Heart left ventricle (tissue), 16 donors: ENCODE measurements at regions of chr3 and their contacts with region 1.

Region 1: GRCh38 chr3:113194823-113195401 is 16.4 kb upstream of the BOC start:
- DNase-seq: no peak
- ATAC-seq: no peak
- H3K4me3 ChIP-seq: no peak overlapping the region
- H3K27ac ChIP-seq: peak overlapping the region in 1 of 12 donors; percentile 55
- H3K4me1 ChIP-seq: no peaks in the 10 kb centered on the region
- H3K27me3 ChIP-seq: no peaks in the 10 kb centered on the region
- CTCF ChIP-seq: no peak
- POLR2A ChIP-seq: no peak

Region 2: DNA sequence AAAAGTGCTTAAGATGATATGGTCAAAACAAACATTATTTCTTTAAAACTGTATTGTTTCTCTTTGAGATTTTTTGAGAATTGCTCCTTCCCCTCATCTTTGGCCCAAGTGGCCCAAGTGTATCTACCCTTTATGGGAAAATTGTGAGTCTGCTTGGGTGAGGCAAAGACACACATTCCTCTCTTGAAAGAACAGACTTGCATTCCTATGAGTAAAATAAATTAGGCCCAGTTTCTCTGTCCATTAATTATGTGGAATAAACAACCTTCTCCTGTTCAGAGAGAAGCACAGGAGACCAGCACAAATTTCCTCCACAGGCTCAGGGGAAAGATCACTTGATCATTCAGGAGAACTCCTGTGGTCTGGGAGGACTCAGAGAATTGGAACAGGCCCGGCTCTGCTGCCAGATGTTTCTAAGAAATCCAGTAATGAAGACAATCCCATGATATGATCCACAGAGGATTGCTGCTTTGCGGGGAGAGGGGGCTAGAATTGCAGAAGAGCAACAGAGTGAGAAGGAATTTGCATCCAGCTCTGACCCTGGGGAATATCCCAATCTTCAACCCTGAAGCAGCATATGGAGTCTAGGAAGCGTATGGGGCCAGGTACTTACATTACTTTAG is 37.4 kb before region 1 on chr3:
- intact Hi-C with region 1: loop called in 1 of 10 experiments (anchors 5 kb)
- DNase-seq: peak in 3 of 5 donors; percentile 33 to 47 (median 40)
- ATAC-seq: peak in 2 of 4 donors; percentile 37 to 69
- H3K4me3 ChIP-seq: no peak overlapping the region
- H3K27ac ChIP-seq: peak overlapping the region in 4 of 12 donors; percentile 38 to 57 (median 44)
- H3K4me1 ChIP-seq: peaks cover 0 to 18% (median 0%) of the 10 kb centered on the region in 12 donors
- H3K27me3 ChIP-seq: no peaks in the 10 kb centered on the region
- CTCF ChIP-seq: no peak
- POLR2A ChIP-seq: no peak

Region 3: GRCh38 chr3:113897373-113897777 is 702.5 kb after region 1 on chr3:
- intact Hi-C with region 1: no loop called
- DNase-seq: no peak
- ATAC-seq: no peak
- H3K4me3 ChIP-seq: no peak overlapping the region
- H3K27ac ChIP-seq: no peak overlapping the region
- H3K4me1 ChIP-seq: peaks cover 0 to 7% (median 0%) of the 10 kb centered on the region in 12 donors
- H3K27me3 ChIP-seq: no peaks in the 10 kb centered on the region
- CTCF ChIP-seq: no peak
- POLR2A ChIP-seq: no peak